MCF 10A (cell line): ENCODE measurements at regions of chr10 and their contacts with region 1.

Region 1: DNA sequence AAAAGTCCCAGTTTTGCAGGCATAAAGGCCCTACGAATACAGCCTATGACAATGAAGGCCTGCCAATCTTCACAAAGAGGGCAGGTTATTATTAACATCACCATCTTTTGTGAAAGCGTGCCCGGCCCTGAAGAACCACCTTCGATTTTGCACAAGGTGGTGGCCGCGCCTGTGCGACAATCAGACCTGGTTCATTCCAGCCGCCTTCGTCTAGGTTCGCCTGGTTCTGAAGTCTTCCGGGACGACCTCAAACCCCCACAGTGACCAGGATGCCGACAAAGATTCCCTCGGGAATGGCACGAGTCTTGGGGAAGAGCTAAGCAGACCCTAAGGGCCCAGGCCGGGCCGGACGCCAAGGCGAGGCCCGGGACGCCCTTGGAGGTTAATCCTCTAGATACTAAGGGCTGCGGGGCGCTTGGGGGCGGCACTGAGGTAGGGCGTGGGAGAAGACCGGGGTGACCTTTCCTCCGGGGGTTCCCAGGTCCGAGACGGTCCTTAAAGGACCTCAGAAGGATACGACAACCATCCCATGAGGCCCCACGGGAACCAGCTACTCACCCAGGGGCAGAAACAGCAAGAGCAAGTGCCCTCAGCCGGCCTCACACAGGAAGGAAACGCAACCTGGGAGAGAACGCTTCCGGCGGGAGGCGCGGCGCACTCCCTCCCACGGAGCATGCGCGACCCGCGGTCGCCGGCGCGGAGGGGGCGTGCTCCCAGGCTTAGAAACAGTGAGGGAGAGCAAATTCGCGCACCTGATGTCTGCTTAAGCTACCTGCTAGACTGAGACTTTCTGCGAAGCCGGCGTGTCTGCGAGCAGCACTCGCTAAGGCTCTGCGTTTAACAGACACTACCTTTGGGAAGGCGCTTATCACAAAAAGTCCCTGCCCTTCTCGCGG is at the start of gene ATAD1:
- DNase-seq: peak; percentile 89
- H3K4me3 Mint-ChIP-seq: peak within 1 kb of the TSS; percentile 95
- H3K27ac Mint-ChIP-seq: peak within 1 kb of the TSS; percentile 79
- H3K4me1 Mint-ChIP-seq: peaks cover 17% of the 10 kb centered on the region
- H3K27me3 Mint-ChIP-seq: no peaks in the 10 kb centered on the region
- CTCF ChIP-seq: no peak
- total RNA-seq, gene ATAD1: 75.2 and 80.7 TPM in 2 replicates

Region 2: DNA sequence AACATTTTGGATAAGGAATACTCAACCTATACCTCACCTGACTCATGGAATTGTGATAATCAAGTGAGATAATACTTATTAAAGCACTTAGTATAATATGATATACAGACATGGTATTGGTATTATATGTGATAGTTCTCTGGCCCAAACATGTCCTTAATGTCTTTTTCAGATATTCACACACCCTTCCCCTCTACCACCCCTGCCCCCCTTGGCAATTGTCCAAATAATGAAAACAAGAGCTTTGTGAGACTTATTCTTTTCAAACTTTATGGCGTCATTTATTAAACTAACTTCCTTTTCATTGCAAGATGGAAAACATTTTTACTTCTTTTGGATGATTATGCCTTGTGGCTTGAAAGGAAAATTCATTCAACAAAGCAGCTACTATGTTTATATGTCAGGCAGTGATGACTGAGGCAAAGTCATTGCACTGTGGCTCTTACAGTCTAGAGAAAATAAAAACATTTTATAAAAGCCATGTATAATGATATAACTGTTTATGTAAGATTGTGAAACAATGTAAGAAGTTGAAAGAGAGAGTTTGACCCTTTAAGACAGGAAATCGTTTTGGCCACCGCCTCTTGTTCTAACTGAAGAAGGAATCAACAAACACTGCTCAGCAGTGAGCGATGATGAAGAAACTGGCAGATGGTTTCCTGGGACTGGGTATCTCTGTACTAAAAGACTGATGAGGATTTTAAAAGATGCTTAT is 285.8 kb before region 1 on chr10:
- CTCF ChIA-PET with region 1: no interaction called
- POLR2A ChIA-PET with region 1: no interaction called
- intact Hi-C with region 1: loop called (anchors 1 kb)
- DNase-seq: peak; percentile 53
- H3K4me3 Mint-ChIP-seq: no peak overlapping the region
- H3K27ac Mint-ChIP-seq: no peak overlapping the region
- H3K4me1 Mint-ChIP-seq: no peaks in the 10 kb centered on the region
- H3K27me3 Mint-ChIP-seq: no peaks in the 10 kb centered on the region
- CTCF ChIP-seq: no peak

Region 3: GRCh38 chr10:87829986-87830729 is 12.3 kb after region 1 on chr10:
- CTCF ChIA-PET with region 1: interaction called, 17 read pairs
- POLR2A ChIA-PET with region 1: interaction called, 36 read pairs
- intact Hi-C with region 1: no loop called
- DNase-seq: no peak
- H3K4me3 Mint-ChIP-seq: no peak overlapping the region
- H3K27ac Mint-ChIP-seq: no peak overlapping the region
- H3K4me1 Mint-ChIP-seq: no peaks in the 10 kb centered on the region
- H3K27me3 Mint-ChIP-seq: no peaks in the 10 kb centered on the region
- CTCF ChIP-seq: no peak

Region 4: DNA sequence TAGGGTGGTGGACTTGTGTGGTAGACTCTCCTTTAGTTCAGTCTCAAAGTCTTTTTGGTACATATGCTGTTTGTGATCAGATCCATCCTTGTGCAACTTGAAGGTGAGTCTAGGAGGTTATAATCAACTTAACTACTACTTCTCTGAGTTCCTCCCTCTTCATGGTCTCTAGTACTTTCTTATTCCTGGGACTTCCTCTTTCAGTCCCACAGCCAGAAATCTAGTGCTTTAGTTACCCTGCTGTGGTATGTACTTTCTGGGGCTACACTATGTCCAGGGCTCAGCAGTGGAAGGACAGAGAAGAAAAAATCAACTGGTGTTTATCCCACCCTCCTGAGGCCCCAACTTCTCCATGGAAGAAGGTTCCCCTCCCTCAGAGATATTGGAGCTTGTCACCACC is 19.6 kb after region 1 on chr10:
- CTCF ChIA-PET with region 1: interaction called, 14 read pairs
- POLR2A ChIA-PET with region 1: interaction called, 186 read pairs
- intact Hi-C with region 1: no loop called
- DNase-seq: no peak
- H3K4me3 Mint-ChIP-seq: no peak overlapping the region
- H3K27ac Mint-ChIP-seq: no peak overlapping the region
- H3K4me1 Mint-ChIP-seq: peaks cover 6% of the 10 kb centered on the region
- H3K27me3 Mint-ChIP-seq: peaks cover 20% of the 10 kb centered on the region
- CTCF ChIP-seq: no peak

Region 5: DNA sequence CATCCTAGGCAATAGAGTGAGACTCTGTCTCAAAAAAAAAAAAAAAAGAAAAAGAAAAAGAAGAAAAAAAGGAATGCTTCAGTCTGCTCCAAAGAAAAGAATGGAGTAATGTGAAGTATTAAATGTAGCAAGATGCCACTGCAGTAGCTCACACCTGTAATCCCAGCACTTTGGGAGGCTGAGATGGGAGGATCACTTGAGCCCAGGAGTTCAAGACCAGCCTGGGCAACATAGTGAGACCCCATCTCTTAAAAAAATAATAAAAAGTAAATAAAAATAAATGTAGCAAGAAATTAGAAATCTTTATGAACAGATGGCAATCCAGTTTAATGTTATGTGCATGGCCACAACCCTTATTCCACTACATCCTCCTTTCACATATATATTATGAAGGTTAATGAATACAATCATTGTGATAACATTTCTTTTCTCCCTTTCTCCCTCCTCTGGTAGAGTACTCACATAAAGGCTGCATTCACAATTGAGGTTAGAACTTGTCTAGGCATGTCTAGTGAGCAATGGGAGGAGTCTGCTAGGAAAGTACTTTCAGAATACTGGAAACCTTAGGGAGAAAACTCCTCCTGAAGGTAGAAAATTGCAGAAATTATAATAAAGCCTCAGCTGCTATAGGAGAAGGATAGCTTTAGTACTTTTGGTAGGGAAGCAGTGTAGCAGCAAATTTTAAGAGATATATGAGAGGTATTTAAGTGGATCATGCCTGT is 25.1 kb after region 1 on chr10:
- CTCF ChIA-PET with region 1: interaction called, 14 read pairs
- POLR2A ChIA-PET with region 1: interaction called, 186 read pairs
- intact Hi-C with region 1: loop called (anchors 1 kb)
- DNase-seq: peak; percentile 81
- H3K4me3 Mint-ChIP-seq: peak overlapping the region; percentile 66
- H3K27ac Mint-ChIP-seq: peak overlapping the region; percentile 95
- H3K4me1 Mint-ChIP-seq: peaks cover 28% of the 10 kb centered on the region
- H3K27me3 Mint-ChIP-seq: no peaks in the 10 kb centered on the region
- CTCF ChIP-seq: no peak

Region 6: GRCh38 chr10:87850742-87851205 is 32.9 kb after region 1 on chr10:
- CTCF ChIA-PET with region 1: interaction called, 12 read pairs
- POLR2A ChIA-PET with region 1: interaction called, 186 read pairs
- intact Hi-C with region 1: no loop called
- DNase-seq: peak; percentile 72
- H3K4me3 Mint-ChIP-seq: no peak overlapping the region
- H3K27ac Mint-ChIP-seq: no peak overlapping the region
- H3K4me1 Mint-ChIP-seq: peaks cover 11% of the 10 kb centered on the region
- H3K27me3 Mint-ChIP-seq: no peaks in the 10 kb centered on the region
- CTCF ChIP-seq: peak; percentile 41

Region 7: DNA sequence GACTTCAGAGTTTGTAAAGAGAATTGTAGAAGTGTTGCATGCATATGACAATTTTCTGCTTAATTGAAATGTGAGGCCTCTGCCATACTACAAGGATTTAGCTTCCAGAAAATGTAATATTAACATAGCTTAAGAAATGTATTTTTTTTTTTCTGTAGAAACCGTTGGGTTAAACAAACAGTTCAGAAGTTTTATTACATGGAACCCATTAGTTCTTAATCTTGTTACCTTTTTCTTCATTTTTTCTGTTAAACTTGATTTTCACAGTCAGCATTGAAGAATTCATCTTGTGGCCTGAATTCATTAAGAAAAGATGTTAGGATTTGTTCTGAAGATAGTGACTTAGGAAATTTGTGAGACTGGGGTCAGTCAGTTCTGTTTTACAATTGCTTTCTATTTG is 50.4 kb after region 1 on chr10:
- CTCF ChIA-PET with region 1: interaction called, 3 read pairs
- POLR2A ChIA-PET with region 1: interaction called, 133 read pairs
- intact Hi-C with region 1: loop called (anchors 5 kb)
- DNase-seq: peak; percentile 30
- H3K4me3 Mint-ChIP-seq: peak overlapping the region; percentile 87
- H3K27ac Mint-ChIP-seq: no peak overlapping the region
- H3K4me1 Mint-ChIP-seq: peaks cover 17% of the 10 kb centered on the region
- H3K27me3 Mint-ChIP-seq: no peaks in the 10 kb centered on the region
- CTCF ChIP-seq: no peak